ENCODE measurements at regions of chr16 and their contacts with region 1.

Region 1: DNA sequence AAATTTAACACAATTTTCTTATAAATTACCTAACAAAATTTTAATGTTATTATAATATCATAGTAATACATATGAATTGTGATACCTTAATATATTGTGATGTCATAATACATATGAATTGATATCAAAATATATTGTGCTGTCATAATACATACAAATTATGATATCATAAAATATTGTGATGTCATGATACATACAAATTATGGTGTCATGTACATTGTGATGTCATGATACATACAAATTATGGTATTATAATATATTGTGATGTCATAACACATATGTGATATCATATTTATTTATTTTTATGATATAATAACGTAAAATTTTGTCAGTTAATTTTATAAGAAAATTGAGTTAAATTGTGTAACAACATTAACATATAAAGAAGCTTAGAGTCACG is 1927.2 kb downstream of the TP53TG3F start:
- DNase-seq: no peak
- ATAC-seq: no peak
- H3K4me3 ChIP-seq: no peak overlapping the region
- H3K27ac ChIP-seq: no peak overlapping the region
- H3K4me1 ChIP-seq: no peaks in the 10 kb centered on the region
- H3K27me3 ChIP-seq: no peaks in the 10 kb centered on the region
- CTCF ChIP-seq: no peak
- POLR2A ChIP-seq: no peak

Region 2: DNA sequence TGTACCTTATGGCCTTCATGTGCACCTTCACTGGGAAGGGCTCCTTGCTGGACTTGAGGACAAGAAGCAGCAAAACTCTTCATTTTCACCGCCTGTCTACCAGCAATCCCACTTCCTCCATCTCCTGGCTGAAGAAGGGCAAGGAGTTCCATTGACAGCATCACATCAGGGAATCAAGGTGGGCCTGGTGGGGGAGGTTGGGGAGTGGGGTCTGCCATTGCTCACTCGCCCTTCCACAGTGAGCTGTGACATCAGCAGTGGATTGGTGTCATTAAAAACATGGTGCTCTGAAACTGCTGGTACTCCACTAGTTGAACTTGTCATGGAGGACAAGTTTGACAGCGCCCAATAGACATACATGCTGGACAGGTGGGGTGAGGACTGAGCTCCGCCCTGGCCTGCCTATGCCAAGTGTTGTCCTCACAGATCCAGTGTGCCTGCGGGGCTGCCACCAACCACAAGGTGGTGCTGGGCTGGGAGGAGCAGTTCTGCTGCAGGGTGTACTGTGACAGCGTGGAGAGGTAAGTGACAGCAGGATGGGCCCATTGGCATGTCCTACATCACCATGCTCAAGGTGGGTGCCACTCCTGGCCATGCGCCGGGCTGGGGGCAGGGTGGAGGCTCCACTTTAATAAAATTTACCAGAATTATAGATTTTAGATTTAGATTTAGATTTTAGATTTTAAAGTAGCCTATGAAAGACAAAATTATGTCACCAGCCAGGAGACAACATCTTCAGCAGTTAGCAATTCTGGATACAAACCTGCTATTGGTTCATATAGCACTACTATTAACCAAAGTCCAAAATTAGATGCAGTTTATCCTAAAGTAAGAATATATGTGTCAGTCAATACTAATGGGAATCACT is 198.1 kb before region 1 on chr16:
- intact Hi-C with region 1: loop called in 1 of 2 experiments (anchors 10 kb)
- DNase-seq: peak in 2 of 3 donors; percentile 49 to 62
- ATAC-seq: peak; percentile 77 to 85 (median 80)
- H3K4me3 ChIP-seq: no peak overlapping the region
- H3K27ac ChIP-seq: no peak overlapping the region
- H3K4me1 ChIP-seq: no peaks in the 10 kb centered on the region
- H3K27me3 ChIP-seq: no peaks in the 10 kb centered on the region
- CTCF ChIP-seq: peak in 2 of 4 donors; percentile 40 to 47
- POLR2A ChIP-seq: no peak

Measured in right lobe of liver (tissue), 6 donors.